HepG2 (cell line): ENCODE measurements at regions of chr22 and their contacts with region 1.

Region 1: GRCh38 chr22:44218071-44218470 is 37.3 kb downstream of the PARVG start:
- DNase-seq: no peak
- ATAC-seq: no peak
- H3K4me3 ChIP-seq: no peak overlapping the region
- H3K27ac ChIP-seq: no peak overlapping the region
- H3K4me1 ChIP-seq: no peaks in the 10 kb centered on the region
- H3K27me3 ChIP-seq: peaks cover 0 to 6% of the 10 kb centered on the region in 2 experiments; a peak in 2 of 5 replicates
- CTCF ChIP-seq: no peak
- EP300 ChIP-seq: no peak
- POLR2A ChIP-seq: no peak
- RAD21 ChIP-seq: no peak

Region 2: DNA sequence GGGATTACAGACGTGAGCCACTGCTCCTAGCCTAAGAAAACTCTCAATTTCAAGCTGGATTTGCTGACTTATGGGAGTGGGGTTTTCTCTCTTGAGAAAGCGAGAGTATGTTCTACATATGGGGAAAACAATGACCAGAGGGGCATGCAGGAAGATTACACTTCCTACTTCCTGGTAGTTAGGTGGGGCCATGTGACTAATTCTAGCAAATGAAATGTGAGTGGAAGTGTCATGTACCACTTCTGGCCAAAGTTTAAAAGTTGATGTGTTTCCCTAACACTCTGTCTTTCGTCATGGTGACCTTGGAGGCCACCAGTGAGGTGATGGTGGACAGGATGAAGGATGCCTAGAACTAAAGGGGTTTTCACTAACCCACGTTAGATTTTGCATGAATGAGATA is 13.2 kb after region 1 on chr22:
- CTCF ChIA-PET with region 1: no interaction called
- POLR2A ChIA-PET with region 1: no interaction called
- in situ Hi-C with region 1: no loop called
- intact Hi-C with region 1: loop called (anchors 1 kb)
- DNase-seq: no peak
- ATAC-seq: no peak
- H3K4me3 ChIP-seq: no peak overlapping the region
- H3K27ac ChIP-seq: no peak overlapping the region
- H3K4me1 ChIP-seq: no peaks in the 10 kb centered on the region
- H3K27me3 ChIP-seq: no peaks in the 10 kb centered on the region; a peak in 1 of 5 replicates
- CTCF ChIP-seq: no peak
- EP300 ChIP-seq: no peak
- POLR2A ChIP-seq: no peak
- RAD21 ChIP-seq: no peak